Heart right ventricle (tissue), 16 donors: ENCODE measurements at regions of chr17 and their contacts with region 1.

Region 1: GRCh38 chr17:29019475-29020181 is 13.8 kb upstream of the SEZ6 start:
- DNase-seq: no peak
- ATAC-seq: peak in 2 of 8 donors; percentile 33 to 67
- H3K4me3 ChIP-seq: peak overlapping the region in 3 of 10 donors; percentile 5 to 21 (median 17)
- H3K27ac ChIP-seq: no peak overlapping the region
- H3K4me1 ChIP-seq: peaks cover 0 to 11% (median 7%) of the 10 kb centered on the region in 9 donors
- H3K27me3 ChIP-seq: peaks cover 8 to 67% (median 55%) of the 10 kb centered on the region in 7 donors
- CTCF ChIP-seq: no peak

Region 2: GRCh38 chr17:29069526-29070041 is 50.0 kb after region 1 on chr17:
- intact Hi-C with region 1: loop called in 1 of 10 experiments (anchors 10 kb)
- DNase-seq: no peak
- ATAC-seq: peak; percentile 21 to 57 (median 41)
- H3K4me3 ChIP-seq: no peak overlapping the region
- H3K27ac ChIP-seq: no peak overlapping the region
- H3K4me1 ChIP-seq: peaks cover 0 to 36% (median 14%) of the 10 kb centered on the region in 9 donors
- H3K27me3 ChIP-seq: no peaks in the 10 kb centered on the region
- CTCF ChIP-seq: no peak